GM10248 (cell line): ENCODE measurements at regions of chr1 and their contacts with region 1.

Region 1: DNA sequence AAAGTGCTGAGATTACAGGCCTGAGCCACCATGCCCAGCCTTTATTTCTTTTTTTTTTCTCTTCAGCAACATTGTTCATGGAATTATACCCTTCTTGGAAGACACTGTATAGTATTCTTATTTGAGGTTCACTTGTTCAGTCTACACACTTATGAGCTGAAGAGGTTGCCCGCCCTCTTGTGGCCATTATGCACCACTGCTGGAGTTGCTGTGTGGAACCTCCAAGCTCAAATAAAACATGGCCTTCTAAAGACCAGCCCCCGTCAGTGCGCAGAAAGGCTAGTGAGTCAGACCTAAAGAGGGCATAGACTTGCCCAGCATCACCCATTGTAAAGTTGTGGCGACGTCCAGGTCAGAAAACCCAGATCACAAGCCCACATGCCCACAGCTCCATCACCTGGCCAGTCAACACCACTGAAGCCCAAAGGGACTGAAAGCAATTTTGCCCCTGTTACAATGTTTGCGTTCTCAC is 20.4 kb downstream of the LURAP1 start:
- DNase-seq: peak; percentile 76
- CTCF ChIP-seq: peak; percentile 93

Region 2: GRCh38 chr1:45957684-45958083 is 265.8 kb before region 1 on chr1:
- CTCF ChIA-PET with region 1: no interaction called
- POLR2A ChIA-PET with region 1: no interaction called
- DNase-seq: no peak
- CTCF ChIP-seq: no peak

Region 3: GRCh38 chr1:46036894-46037839 is 186.3 kb before region 1 on chr1:
- CTCF ChIA-PET with region 1: interaction called, 110 read pairs
- POLR2A ChIA-PET with region 1: no interaction called
- DNase-seq: peak; percentile 85
- CTCF ChIP-seq: peak; percentile 99

Region 4: GRCh38 chr1:46179138-46180081 is 44.1 kb before region 1 on chr1:
- CTCF ChIA-PET with region 1: interaction called, 51 read pairs
- POLR2A ChIA-PET with region 1: no interaction called
- DNase-seq: peak; percentile 78
- CTCF ChIP-seq: peak; percentile 85

Region 5: GRCh38 chr1:46203738-46204405 is 19.6 kb before region 1 on chr1:
- CTCF ChIA-PET with region 1: interaction called, 30 read pairs
- POLR2A ChIA-PET with region 1: no interaction called
- DNase-seq: no peak
- CTCF ChIP-seq: no peak

Region 6: GRCh38 chr1:46236882-46237281 is 13.4 kb after region 1 on chr1:
- CTCF ChIA-PET with region 1: interaction called, 58 read pairs
- POLR2A ChIA-PET with region 1: interaction called, 3 read pairs
- DNase-seq: no peak
- CTCF ChIP-seq: no peak